ENCODE measurements at regions of chr17 and their contacts with region 1.

Region 1: DNA sequence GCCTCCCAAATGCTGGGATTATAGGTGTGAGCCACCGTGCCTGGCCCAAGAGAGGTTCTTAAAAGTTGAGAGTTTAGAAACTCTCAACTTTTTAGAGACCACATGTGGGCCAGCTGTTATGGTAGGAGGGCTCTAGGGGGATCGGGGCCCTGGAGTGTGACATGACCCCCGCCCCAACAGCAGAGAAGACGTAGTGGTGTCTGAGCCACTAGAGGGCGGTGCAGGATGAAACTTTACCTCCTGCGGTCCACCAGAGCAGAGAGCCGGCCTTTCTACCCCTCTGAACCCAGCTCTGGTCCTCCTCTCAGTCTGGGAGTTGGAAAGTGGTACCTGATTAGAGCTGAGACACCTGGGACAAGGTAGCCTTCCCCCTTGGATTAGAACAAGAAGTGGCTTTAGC is 7.4 kb downstream of the CDK5RAP3 start:
- DNase-seq: no peak
- H3K4me3 ChIP-seq: no peak overlapping the region
- H3K27ac ChIP-seq: no peak overlapping the region
- H3K4me1 ChIP-seq: peaks cover 0 to 40% (median 28%) of the 10 kb centered on the region in 6 donors
- H3K27me3 ChIP-seq: no peaks in the 10 kb centered on the region
- CTCF ChIP-seq: peak; percentile 31 to 76 (median 67)
- POLR2A ChIP-seq: no peak

Region 2: GRCh38 chr17:47810205-47810821 is 168.0 kb before region 1 on chr17:
- intact Hi-C with region 1: no loop called
- DNase-seq: no peak
- H3K4me3 ChIP-seq: no peak overlapping the region
- H3K27ac ChIP-seq: peak overlapping the region in 3 of 8 donors; percentile 2 to 9 (median 5)
- H3K4me1 ChIP-seq: peaks cover 0 to 5% (median 0%) of the 10 kb centered on the region in 6 donors
- H3K27me3 ChIP-seq: no peaks in the 10 kb centered on the region
- CTCF ChIP-seq: no peak
- POLR2A ChIP-seq: no peak

Region 3: GRCh38 chr17:47915776-47916398 is 62.4 kb before region 1 on chr17:
- intact Hi-C with region 1: no loop called
- DNase-seq: no peak
- H3K4me3 ChIP-seq: no peak overlapping the region
- H3K27ac ChIP-seq: no peak overlapping the region
- H3K4me1 ChIP-seq: peaks cover 0 to 16% (median 6%) of the 10 kb centered on the region in 6 donors
- H3K27me3 ChIP-seq: no peaks in the 10 kb centered on the region
- CTCF ChIP-seq: no peak
- POLR2A ChIP-seq: no peak

Region 4: GRCh38 chr17:48016112-48016511 is 37.8 kb after region 1 on chr17:
- intact Hi-C with region 1: loop called (anchors 5 kb)
- DNase-seq: no peak
- H3K4me3 ChIP-seq: no peak overlapping the region
- H3K27ac ChIP-seq: no peak overlapping the region
- H3K4me1 ChIP-seq: peaks cover 8 to 38% (median 33%) of the 10 kb centered on the region in 6 donors
- H3K27me3 ChIP-seq: peaks cover 0 to 60% (median 14%) of the 10 kb centered on the region in 7 donors
- CTCF ChIP-seq: no peak
- POLR2A ChIP-seq: no peak